Activated CD8-positive, alpha-beta memory T cell treated with anti-CD3 and anti-CD28 coated beads, Interleukin-2, amount 10 ng/mL, durations not matched to agents 7 days and 5 days (primary cell): ENCODE measurements at regions of chr3 and their contacts with region 1.

Region 1: GRCh38 chr3:49454458-49454857 is 15.6 kb upstream of the DAG1 start:
- DNase-seq: no peak
- ATAC-seq: peak; percentile 42
- H3K4me3 Mint-ChIP-seq: no peak overlapping the region
- H3K27ac Mint-ChIP-seq: no peak overlapping the region
- H3K4me1 Mint-ChIP-seq: no peaks in the 10 kb centered on the region
- H3K27me3 Mint-ChIP-seq: no peaks in the 10 kb centered on the region

Region 2: DNA sequence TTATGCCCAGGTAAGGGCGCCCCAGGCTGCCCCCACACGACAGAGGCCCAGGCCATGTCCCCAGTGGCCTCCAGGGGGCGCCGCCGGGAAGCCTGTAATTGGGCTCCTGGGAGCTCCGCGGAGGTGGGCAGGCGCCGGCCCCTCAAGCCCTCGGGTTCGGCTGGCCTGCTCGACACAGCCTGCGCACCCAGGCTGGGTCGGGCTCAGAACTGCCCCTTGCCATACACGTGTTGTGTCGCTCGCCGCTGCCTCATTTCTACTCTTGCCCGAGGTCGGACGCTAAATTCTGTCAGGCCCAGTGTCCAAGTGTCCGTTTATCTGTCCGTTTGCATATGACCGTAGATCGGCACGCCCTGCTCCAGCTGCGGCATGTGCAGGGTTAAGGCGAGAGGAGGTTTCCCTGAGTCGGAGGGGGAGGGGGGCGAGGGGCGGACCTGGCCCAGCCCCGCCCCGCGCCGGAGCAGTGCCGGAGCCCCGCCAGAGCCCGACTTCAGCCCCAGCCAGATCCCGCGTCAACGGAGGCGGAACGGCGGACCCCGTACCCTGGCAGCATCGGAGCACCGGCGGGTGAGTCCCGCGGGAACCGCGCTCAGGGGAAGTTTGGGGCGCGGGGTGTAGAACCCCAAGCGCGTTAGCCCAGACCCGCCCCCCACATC is 283.2 kb before region 1 on chr3 and contains the start of gene KLHDC8B:
- CTCF ChIA-PET with region 1: interaction called, 43 read pairs
- DNase-seq: peak; percentile 88
- ATAC-seq: peak; percentile 90
- H3K4me3 Mint-ChIP-seq: peak within 1 kb of the TSS; percentile 79
- H3K27ac Mint-ChIP-seq: no peak within 1 kb of the TSS
- H3K4me1 Mint-ChIP-seq: peaks cover 22% of the 10 kb centered on the region
- H3K27me3 Mint-ChIP-seq: no peaks in the 10 kb centered on the region
- total RNA-seq, gene KLHDC8B: 0.80 to 1.3 TPM

Region 3: GRCh38 chr3:49358217-49358883 is 96.1 kb before region 1 on chr3 and contains the start of gene GPX1:
- CTCF ChIA-PET with region 1: interaction called, 14 read pairs
- DNase-seq: peak; percentile 91
- ATAC-seq: peak; percentile 91
- H3K4me3 Mint-ChIP-seq: peak within 1 kb of the TSS; percentile 83
- H3K27ac Mint-ChIP-seq: peak within 1 kb of the TSS; percentile 87
- H3K4me1 Mint-ChIP-seq: peaks cover 26% of the 10 kb centered on the region
- H3K27me3 Mint-ChIP-seq: no peaks in the 10 kb centered on the region
- total RNA-seq, gene GPX1: 76.9 to 112 TPM

Region 4: GRCh38 chr3:49411968-49412631 is 42.4 kb before region 1 on chr3 and contains the starts of genes RHOA and TCTA:
- CTCF ChIA-PET with region 1: interaction called, 43 read pairs
- DNase-seq: peak; percentile 99
- ATAC-seq: peak; percentile 85
- H3K4me3 Mint-ChIP-seq: peak within 1 kb of the TSS; percentile 95
- H3K27ac Mint-ChIP-seq: peak within 1 kb of the TSS; percentile 92
- H3K4me1 Mint-ChIP-seq: peaks cover 62% of the 10 kb centered on the region
- H3K27me3 Mint-ChIP-seq: no peaks in the 10 kb centered on the region
- total RNA-seq, gene RHOA: 439 to 539 TPM
- total RNA-seq, gene TCTA: 27.7 to 28.0 TPM

Region 5: GRCh38 chr3:49422379-49423248 is 31.8 kb before region 1 on chr3 and contains the start of gene AMT:
- CTCF ChIA-PET with region 1: interaction called, 10 read pairs
- DNase-seq: no peak
- ATAC-seq: no peak
- H3K4me3 Mint-ChIP-seq: no peak within 1 kb of the TSS
- H3K27ac Mint-ChIP-seq: no peak within 1 kb of the TSS
- H3K4me1 Mint-ChIP-seq: peaks cover 44% of the 10 kb centered on the region
- H3K27me3 Mint-ChIP-seq: no peaks in the 10 kb centered on the region
- total RNA-seq, gene AMT: 3.2 to 6.9 TPM

Region 6: GRCh38 chr3:49469936-49470713 is 15.7 kb after region 1 on chr3 and contains the start of gene DAG1:
- CTCF ChIA-PET with region 1: interaction called, 27 read pairs
- DNase-seq: peak; percentile 97
- ATAC-seq: peak; percentile 90
- H3K4me3 Mint-ChIP-seq: peak within 1 kb of the TSS; percentile 87
- H3K27ac Mint-ChIP-seq: peak within 1 kb of the TSS; percentile 90
- H3K4me1 Mint-ChIP-seq: peaks cover 22% of the 10 kb centered on the region
- H3K27me3 Mint-ChIP-seq: no peaks in the 10 kb centered on the region
- total RNA-seq, gene DAG1: 17.6 to 17.9 TPM